CD14-positive monocyte (primary cell): ENCODE measurements at regions of chr11 and their contacts with region 1.

Region 1: GRCh38 chr11:117851106-117851505 is 25.4 kb downstream of the FXYD6 start:
- DNase-seq: no peak
- H3K4me3 ChIP-seq: no peak overlapping the region
- H3K4me3 Mint-ChIP-seq: no peak overlapping the region
- H3K27ac ChIP-seq: no peak overlapping the region
- H3K27ac Mint-ChIP-seq: no peak overlapping the region
- H3K4me1 ChIP-seq: no peaks in the 10 kb centered on the region
- H3K4me1 Mint-ChIP-seq: peaks cover 5% of the 10 kb centered on the region
- H3K27me3 ChIP-seq: no peaks in the 10 kb centered on the region
- H3K27me3 Mint-ChIP-seq: peaks cover 0 to 1% (median 0%) of the 10 kb centered on the region in 3 donors
- CTCF ChIP-seq: no peak

Region 2: GRCh38 chr11:117891362-117891761 is 40.3 kb after region 1 on chr11:
- intact Hi-C with region 1: loop called in 1 of 2 experiments (anchors 5 kb)
- DNase-seq: no peak
- H3K4me3 ChIP-seq: no peak overlapping the region
- H3K4me3 Mint-ChIP-seq: no peak overlapping the region
- H3K27ac ChIP-seq: no peak overlapping the region
- H3K27ac Mint-ChIP-seq: peak overlapping the region in 1 of 7 donors; percentile 1
- H3K4me1 ChIP-seq: no peaks in the 10 kb centered on the region
- H3K4me1 Mint-ChIP-seq: no peaks in the 10 kb centered on the region
- H3K27me3 ChIP-seq: no peaks in the 10 kb centered on the region
- H3K27me3 Mint-ChIP-seq: peaks cover 0 to 6% (median 4%) of the 10 kb centered on the region in 3 donors
- CTCF ChIP-seq: no peak

Region 3: DNA sequence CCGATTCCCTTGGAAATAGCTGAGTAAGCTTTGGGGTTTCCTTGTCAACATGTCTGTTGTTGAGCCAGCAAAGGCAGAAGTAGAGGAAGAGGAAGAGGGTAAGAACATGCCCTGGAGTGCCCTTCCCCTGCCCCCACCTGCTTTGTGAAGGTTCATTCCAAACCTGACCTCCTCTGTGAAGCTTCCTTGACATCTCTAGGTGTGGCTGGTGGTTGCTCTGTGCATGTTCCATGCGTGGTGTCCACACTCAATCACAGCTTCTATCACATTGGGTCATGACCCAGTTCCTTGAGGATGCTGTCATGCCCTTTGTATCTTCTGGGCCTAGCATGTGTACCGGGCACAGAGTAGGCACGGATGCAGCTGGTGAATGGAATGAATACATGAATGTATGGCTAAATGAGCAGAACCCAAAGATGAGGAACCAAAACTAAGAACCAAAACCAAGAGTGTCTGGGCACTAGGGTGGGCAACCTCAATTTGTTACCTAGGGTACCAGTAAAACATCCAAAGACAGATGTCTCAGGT is 49.1 kb after region 1 on chr11:
- intact Hi-C with region 1: loop called (anchors 2 to 10 kb)
- DNase-seq: peak; percentile 41 to 59 (median 41)
- H3K4me3 ChIP-seq: peak overlapping the region in 1 of 3 experiments; percentile 18
- H3K4me3 Mint-ChIP-seq: no peak overlapping the region
- H3K27ac ChIP-seq: peak overlapping the region; percentile 43 to 57
- H3K27ac Mint-ChIP-seq: peak overlapping the region; percentile 28 to 82 (median 71)
- H3K4me1 ChIP-seq: peaks cover 15 to 20% of the 10 kb centered on the region in 2 donors
- H3K4me1 Mint-ChIP-seq: peaks cover 21% of the 10 kb centered on the region
- H3K27me3 ChIP-seq: no peaks in the 10 kb centered on the region
- H3K27me3 Mint-ChIP-seq: peaks cover 0 to 3% (median 2%) of the 10 kb centered on the region in 3 donors
- CTCF ChIP-seq: no peak

Region 4: DNA sequence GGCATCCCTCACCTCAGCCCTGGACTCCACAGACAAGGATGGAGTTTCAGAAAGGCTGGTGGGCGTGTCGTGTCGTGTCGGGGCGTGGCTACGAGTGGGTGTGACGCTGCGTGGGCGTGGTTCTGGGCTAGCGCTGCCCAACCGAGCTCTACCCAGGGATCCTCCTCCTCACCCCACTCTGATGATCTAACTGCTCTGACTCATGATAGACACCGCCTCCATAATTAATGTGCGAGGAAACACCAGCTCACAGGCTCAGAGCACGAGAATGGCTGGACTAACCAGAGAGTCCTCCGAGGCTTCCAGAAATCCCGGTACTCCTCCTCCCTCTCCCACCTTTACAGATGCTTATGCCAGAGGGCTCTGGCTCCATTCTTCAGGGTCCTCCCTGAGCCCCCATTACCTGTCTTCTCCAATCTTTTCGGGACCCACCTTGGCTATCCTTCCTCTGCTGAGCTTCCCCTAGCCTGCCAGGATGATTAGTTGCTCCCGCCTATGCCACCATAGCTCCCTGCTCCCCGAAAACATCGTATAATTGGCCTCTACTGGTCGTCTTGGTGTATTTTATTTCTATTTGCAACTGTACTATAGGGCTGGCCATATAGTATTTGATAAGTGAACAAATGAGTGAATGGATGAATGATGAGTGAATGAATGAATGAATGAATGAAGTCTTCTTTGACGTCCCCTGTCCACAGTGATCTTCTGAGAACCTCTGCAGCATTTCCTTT is 56.3 kb after region 1 on chr11:
- intact Hi-C with region 1: loop called in 1 of 2 experiments (anchors 10 kb)
- DNase-seq: peak; percentile 91 to 96 (median 93)
- H3K4me3 ChIP-seq: peak overlapping the region in 1 of 3 experiments; percentile 36
- H3K4me3 Mint-ChIP-seq: peak overlapping the region; percentile 59
- H3K27ac ChIP-seq: peak overlapping the region; percentile 9 to 70
- H3K27ac Mint-ChIP-seq: peak overlapping the region; percentile 72 to 88 (median 85)
- H3K4me1 ChIP-seq: peaks cover 6 to 16% of the 10 kb centered on the region in 2 donors
- H3K4me1 Mint-ChIP-seq: peaks cover 16% of the 10 kb centered on the region
- H3K27me3 ChIP-seq: no peaks in the 10 kb centered on the region
- H3K27me3 Mint-ChIP-seq: peaks cover 1 to 4% (median 4%) of the 10 kb centered on the region in 3 donors
- CTCF ChIP-seq: no peak

Region 5: GRCh38 chr11:117941163-117941707 is 90.1 kb after region 1 on chr11:
- intact Hi-C with region 1: loop called in 1 of 2 experiments (anchors 5 kb)
- DNase-seq: no peak
- H3K4me3 ChIP-seq: no peak overlapping the region
- H3K4me3 Mint-ChIP-seq: no peak overlapping the region
- H3K27ac ChIP-seq: no peak overlapping the region
- H3K27ac Mint-ChIP-seq: peak overlapping the region in 2 of 7 donors; percentile 15 to 70
- H3K4me1 ChIP-seq: no peaks in the 10 kb centered on the region
- H3K4me1 Mint-ChIP-seq: peaks cover 9% of the 10 kb centered on the region
- H3K27me3 ChIP-seq: no peaks in the 10 kb centered on the region
- H3K27me3 Mint-ChIP-seq: peaks cover 1 to 8% (median 3%) of the 10 kb centered on the region in 3 donors
- CTCF ChIP-seq: no peak

Region 6: GRCh38 chr11:117953024-117953671 is 102.0 kb after region 1 on chr11:
- intact Hi-C with region 1: no loop called
- DNase-seq: peak in 1 of 3 donors; percentile 43
- H3K4me3 ChIP-seq: peak overlapping the region in 1 of 3 experiments; percentile 26
- H3K4me3 Mint-ChIP-seq: no peak overlapping the region
- H3K27ac ChIP-seq: peak overlapping the region in 1 of 2 donors; percentile 63
- H3K27ac Mint-ChIP-seq: peak overlapping the region in 6 of 7 donors; percentile 46 to 83 (median 70)
- H3K4me1 ChIP-seq: peaks cover 53 to 56% of the 10 kb centered on the region in 2 donors
- H3K4me1 Mint-ChIP-seq: peaks cover 60% of the 10 kb centered on the region
- H3K27me3 ChIP-seq: no peaks in the 10 kb centered on the region
- H3K27me3 Mint-ChIP-seq: no peaks in the 10 kb centered on the region
- CTCF ChIP-seq: no peak